Caco-2 (cell line): ENCODE measurements at regions of chr1 and their contacts with region 1.

Region 1: GRCh38 chr1:3618881-3619671 is 5.7 kb upstream of the TPRG1L start:
- DNase-seq: peak; percentile 65 to 73
- H3K4me3 ChIP-seq: no peak overlapping the region
- H3K4me3 Mint-ChIP-seq: no peak overlapping the region
- H3K27ac Mint-ChIP-seq: no peak overlapping the region
- H3K4me1 ChIP-seq: peaks cover 29% of the 10 kb centered on the region
- H3K4me1 Mint-ChIP-seq: peaks cover 28% of the 10 kb centered on the region
- H3K27me3 ChIP-seq: no peaks in the 10 kb centered on the region
- H3K27me3 Mint-ChIP-seq: no peaks in the 10 kb centered on the region
- CTCF ChIP-seq: peak; percentile 78 to 82

Region 2: DNA sequence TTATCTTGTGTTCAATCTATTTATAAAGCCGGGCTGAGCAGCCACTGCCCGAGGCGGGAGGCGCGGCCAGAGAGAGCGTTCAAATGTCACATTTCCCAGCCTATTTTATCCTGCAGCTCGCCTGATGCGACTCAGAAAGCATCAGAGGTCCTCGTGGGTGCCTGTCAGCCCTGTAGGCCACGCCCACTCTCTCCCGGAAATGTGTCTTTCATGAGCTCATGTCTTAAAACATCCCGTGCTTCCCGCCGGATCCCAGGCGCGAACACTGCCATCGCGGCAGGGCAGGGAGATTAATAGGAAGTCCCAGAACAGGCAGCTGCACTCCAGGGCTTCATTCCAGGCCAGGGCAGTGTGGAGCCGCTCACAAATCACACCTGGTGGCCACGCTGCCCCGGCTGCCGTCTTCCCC is 432.6 kb before region 1 on chr1:
- CTCF ChIA-PET with region 1: no interaction called
- POLR2A ChIA-PET with region 1: no interaction called
- intact Hi-C with region 1: no loop called
- DNase-seq: no peak
- H3K4me3 ChIP-seq: no peak overlapping the region
- H3K4me3 Mint-ChIP-seq: no peak overlapping the region
- H3K27ac Mint-ChIP-seq: no peak overlapping the region
- H3K4me1 ChIP-seq: peaks cover 5% of the 10 kb centered on the region; the same call in 1 of the 2 replicates
- H3K4me1 Mint-ChIP-seq: no peaks in the 10 kb centered on the region
- H3K27me3 ChIP-seq: no peaks in the 10 kb centered on the region
- H3K27me3 Mint-ChIP-seq: no peaks in the 10 kb centered on the region
- CTCF ChIP-seq: no peak

Region 3: DNA sequence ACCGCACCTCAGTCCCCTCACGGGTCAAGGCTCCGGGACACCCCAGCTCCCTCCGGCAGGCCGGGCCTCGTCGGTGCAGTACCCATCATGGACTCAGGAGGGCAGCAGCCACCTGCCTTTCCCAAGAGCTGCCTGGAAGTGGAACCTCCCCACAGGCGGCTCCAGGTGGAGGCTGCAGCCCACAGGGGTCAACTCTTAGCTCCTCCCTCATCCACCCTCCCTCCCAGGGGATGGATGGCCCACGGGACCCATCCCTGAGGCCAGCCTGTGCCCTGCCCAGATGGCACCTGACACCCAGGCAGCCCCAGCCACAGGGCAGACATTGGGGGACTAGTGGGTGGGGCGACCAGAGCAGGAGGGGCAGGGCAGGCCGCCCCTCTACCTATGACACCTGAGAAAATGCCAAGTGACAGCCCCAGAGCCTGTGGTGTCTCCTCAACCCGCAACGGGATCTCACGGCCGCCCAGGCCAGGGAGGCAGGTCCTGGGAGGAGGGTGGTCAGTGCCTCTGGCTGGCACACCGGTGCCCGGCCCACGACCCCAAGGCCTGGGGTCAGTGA is 165.8 kb before region 1 on chr1:
- CTCF ChIA-PET with region 1: interaction called, 44 read pairs
- POLR2A ChIA-PET with region 1: no interaction called
- intact Hi-C with region 1: loop called (anchors 2 kb)
- DNase-seq: peak; percentile 84 to 89
- H3K4me3 ChIP-seq: no peak overlapping the region
- H3K4me3 Mint-ChIP-seq: peak overlapping the region; percentile 62
- H3K27ac Mint-ChIP-seq: no peak overlapping the region
- H3K4me1 ChIP-seq: peaks cover 47% of the 10 kb centered on the region
- H3K4me1 Mint-ChIP-seq: peaks cover 7% of the 10 kb centered on the region
- H3K27me3 ChIP-seq: no peaks in the 10 kb centered on the region
- H3K27me3 Mint-ChIP-seq: no peaks in the 10 kb centered on the region
- CTCF ChIP-seq: peak; percentile 88 to 89

Region 4: DNA sequence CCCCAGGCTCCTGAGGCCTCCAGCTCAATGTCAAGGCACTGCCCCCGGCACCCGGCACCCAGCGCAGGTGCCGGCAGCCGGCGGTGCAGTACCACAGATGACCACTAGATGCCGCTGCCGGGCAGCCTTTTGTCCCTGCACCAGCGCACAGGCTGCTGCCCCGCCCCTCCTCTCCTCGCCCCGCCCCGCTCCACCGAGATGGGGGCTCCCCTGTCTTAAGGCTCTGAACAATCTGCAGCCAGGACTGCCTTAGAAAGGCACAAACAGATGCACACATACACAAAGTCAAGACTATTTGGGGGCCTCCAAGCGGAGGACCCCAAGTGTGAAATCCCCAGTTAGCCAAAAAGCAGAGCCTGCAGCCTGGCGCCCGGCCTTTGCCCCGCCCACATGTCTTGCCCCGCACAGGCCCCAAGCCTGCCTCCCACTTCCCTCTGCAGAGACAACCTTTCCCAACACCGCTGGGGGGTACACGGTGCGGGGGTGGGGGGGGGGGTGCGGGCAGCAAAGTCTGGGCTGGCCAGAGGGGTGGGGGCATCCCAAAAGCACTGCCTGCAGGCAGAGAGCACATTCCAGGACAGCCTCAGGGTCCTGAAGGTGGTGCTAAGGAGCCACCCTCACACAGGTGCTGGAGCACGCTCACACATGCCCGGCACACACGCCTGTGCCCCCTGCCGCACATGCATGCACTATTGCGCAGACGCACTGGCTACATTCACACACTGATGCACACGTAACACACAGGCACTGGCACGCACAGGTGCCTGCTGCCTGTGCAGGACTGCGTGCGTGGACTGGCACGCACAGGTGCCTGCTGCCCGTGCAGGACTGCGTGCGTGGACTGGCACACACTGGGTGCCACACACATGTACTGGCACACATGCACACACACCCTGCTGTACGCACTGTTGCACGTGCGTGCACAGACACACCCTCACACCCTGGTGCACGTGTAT is 127.5 kb before region 1 on chr1:
- CTCF ChIA-PET with region 1: interaction called, 16 read pairs
- POLR2A ChIA-PET with region 1: interaction called, 3 read pairs
- intact Hi-C with region 1: loop called (anchors 1 kb)
- DNase-seq: peak; percentile 69 to 80
- H3K4me3 ChIP-seq: no peak overlapping the region
- H3K4me3 Mint-ChIP-seq: peak overlapping the region; percentile 65
- H3K27ac Mint-ChIP-seq: no peak overlapping the region
- H3K4me1 ChIP-seq: no peaks in the 10 kb centered on the region
- H3K4me1 Mint-ChIP-seq: no peaks in the 10 kb centered on the region
- H3K27me3 ChIP-seq: no peaks in the 10 kb centered on the region
- H3K27me3 Mint-ChIP-seq: no peaks in the 10 kb centered on the region
- CTCF ChIP-seq: peak; percentile 87 to 97

Region 5: DNA sequence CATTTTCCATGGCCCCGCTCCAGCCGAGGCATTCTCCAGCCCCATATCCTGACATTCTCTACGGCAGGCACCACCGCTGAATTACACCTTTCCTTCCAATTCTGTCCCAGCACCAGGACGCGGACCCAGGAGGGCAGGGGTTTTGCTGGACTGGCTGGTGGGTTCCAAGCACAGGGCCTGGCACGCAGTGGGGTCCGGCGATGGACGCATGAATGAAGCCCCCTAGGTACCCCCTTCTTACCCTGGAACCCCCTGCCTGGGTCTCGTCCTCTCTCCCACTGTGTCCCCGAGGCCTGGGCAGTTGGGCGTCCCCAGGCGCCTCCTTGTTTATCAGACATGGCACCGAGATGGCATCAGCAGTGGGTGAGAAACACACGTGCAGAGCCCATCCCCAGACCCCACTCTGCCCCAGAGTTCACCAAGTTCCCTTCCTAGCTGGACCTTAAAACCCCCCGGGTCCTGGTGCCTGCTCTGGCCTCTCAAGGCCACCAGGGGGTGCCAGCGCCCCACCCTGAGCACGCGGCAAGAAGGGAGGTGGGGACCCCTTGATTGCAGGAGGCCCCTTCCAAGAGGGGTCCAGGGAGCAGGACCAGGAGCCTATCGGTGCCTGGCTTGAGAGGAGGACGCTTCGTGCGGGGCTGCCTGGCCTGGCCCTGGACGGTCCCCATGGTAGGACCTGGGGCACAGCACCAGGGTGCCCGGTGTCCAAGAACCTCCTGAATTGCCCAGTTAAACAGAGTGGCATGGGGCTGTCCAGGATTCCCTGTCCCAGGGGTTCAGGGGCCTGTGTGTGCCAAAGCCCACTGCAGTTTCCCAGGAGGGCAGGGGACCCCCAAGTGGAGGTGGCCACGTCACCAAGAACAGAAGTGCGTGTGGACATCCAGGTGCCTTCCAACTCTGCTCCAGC is 53.9 kb before region 1 on chr1:
- CTCF ChIA-PET with region 1: interaction called, 9 read pairs
- POLR2A ChIA-PET with region 1: no interaction called
- intact Hi-C with region 1: loop called (anchors 1 kb)
- DNase-seq: peak in 1 of 2 experiments; percentile 50
- H3K4me3 ChIP-seq: no peak overlapping the region
- H3K4me3 Mint-ChIP-seq: no peak overlapping the region
- H3K27ac Mint-ChIP-seq: no peak overlapping the region
- H3K4me1 ChIP-seq: no peaks in the 10 kb centered on the region
- H3K4me1 Mint-ChIP-seq: no peaks in the 10 kb centered on the region
- H3K27me3 ChIP-seq: no peaks in the 10 kb centered on the region
- H3K27me3 Mint-ChIP-seq: no peaks in the 10 kb centered on the region
- CTCF ChIP-seq: peak; percentile 75 to 78

Region 6: GRCh38 chr1:3586932-3587678 is 32.0 kb before region 1 on chr1:
- CTCF ChIA-PET with region 1: interaction called, 35 read pairs
- POLR2A ChIA-PET with region 1: no interaction called
- intact Hi-C with region 1: loop called (anchors 1 kb)
- DNase-seq: peak in 1 of 2 experiments; percentile 27
- H3K4me3 ChIP-seq: no peak overlapping the region
- H3K4me3 Mint-ChIP-seq: no peak overlapping the region
- H3K27ac Mint-ChIP-seq: no peak overlapping the region
- H3K4me1 ChIP-seq: 0 out of 2 replicates have a peak, but pooled peaks cover 3% of the 10 kb centered on the region
- H3K4me1 Mint-ChIP-seq: no peaks in the 10 kb centered on the region
- H3K27me3 ChIP-seq: no peaks in the 10 kb centered on the region
- H3K27me3 Mint-ChIP-seq: no peaks in the 10 kb centered on the region
- CTCF ChIP-seq: peak in 1 of 2 experiments; percentile 0